CD8-positive, alpha-beta T cell (primary cell): ENCODE measurements at regions of chr6 and their contacts with region 1.

Region 1: DNA sequence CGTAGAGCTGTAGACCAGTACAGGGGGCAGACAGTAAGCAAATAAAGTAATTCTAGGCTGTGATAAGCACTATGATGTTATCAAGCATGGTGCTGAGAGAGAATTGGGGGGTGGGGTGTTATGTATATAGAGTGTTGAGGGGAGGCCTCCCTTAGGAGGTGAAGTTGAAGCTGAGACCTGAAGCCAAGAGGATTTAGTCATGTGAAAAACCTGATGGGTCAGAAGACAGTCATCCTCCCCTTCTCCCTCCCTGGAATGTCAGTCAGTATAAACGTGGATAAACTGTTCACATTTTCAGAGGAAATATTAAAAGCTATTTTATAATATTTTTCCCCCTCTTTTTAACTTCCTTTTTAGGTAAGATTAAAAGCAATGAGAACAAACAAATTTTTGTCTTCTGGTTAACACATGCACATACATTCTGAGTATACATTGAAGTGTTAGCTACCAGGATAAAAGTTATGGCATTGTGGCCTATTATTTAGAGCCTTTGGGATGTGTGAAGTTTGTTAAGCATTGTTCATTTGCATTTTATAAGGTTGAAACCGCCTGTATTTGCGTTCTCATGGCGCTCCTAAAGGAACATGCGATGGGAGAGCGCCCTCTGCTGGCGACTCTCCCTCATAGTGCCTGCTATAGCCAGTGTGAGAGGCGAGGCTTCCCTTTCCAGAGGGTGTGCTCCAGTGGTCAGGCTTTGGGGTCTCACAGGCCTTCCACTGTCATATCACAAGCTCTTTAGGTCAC is 35.4 kb upstream of the MAPK13 start:
- DNase-seq: peak; percentile 59 to 89 (median 82)
- ATAC-seq: peak; percentile 71
- H3K4me3 ChIP-seq: no peak overlapping the region
- H3K4me3 Mint-ChIP-seq: no peak overlapping the region
- H3K27ac ChIP-seq: peak overlapping the region in 1 of 2 experiments; percentile 42
- H3K27ac Mint-ChIP-seq: peak overlapping the region; percentile 67
- H3K4me1 ChIP-seq: peaks cover 27% of the 10 kb centered on the region
- H3K4me1 Mint-ChIP-seq: peaks cover 33% of the 10 kb centered on the region
- H3K27me3 ChIP-seq: no peaks in the 10 kb centered on the region
- H3K27me3 Mint-ChIP-seq: no peaks in the 10 kb centered on the region
- CTCF ChIP-seq: peak; percentile 98

Region 2: GRCh38 chr6:36067374-36068011 is 27.4 kb before region 1 on chr6:
- CTCF ChIA-PET with region 1: interaction called, 10 read pairs
- POLR2A ChIA-PET with region 1: no interaction called
- intact Hi-C with region 1: no loop called
- DNase-seq: no peak
- ATAC-seq: no peak
- H3K4me3 ChIP-seq: no peak overlapping the region
- H3K4me3 Mint-ChIP-seq: no peak overlapping the region
- H3K27ac ChIP-seq: no peak overlapping the region
- H3K27ac Mint-ChIP-seq: peak overlapping the region; percentile 38
- H3K4me1 ChIP-seq: peaks cover 15% of the 10 kb centered on the region
- H3K4me1 Mint-ChIP-seq: peaks cover 64% of the 10 kb centered on the region
- H3K27me3 ChIP-seq: no peaks in the 10 kb centered on the region
- H3K27me3 Mint-ChIP-seq: no peaks in the 10 kb centered on the region
- CTCF ChIP-seq: no peak

Region 3: GRCh38 chr6:36083446-36083845 is 11.5 kb before region 1 on chr6:
- CTCF ChIA-PET with region 1: interaction called, 36 read pairs
- POLR2A ChIA-PET with region 1: no interaction called
- intact Hi-C with region 1: loop called in 1 of 2 experiments (anchors 2 kb)
- DNase-seq: no peak
- ATAC-seq: no peak
- H3K4me3 ChIP-seq: no peak overlapping the region
- H3K4me3 Mint-ChIP-seq: no peak overlapping the region
- H3K27ac ChIP-seq: no peak overlapping the region
- H3K27ac Mint-ChIP-seq: no peak overlapping the region
- H3K4me1 ChIP-seq: no peaks in the 10 kb centered on the region
- H3K4me1 Mint-ChIP-seq: peaks cover 17% of the 10 kb centered on the region
- H3K27me3 ChIP-seq: no peaks in the 10 kb centered on the region
- H3K27me3 Mint-ChIP-seq: no peaks in the 10 kb centered on the region
- CTCF ChIP-seq: no peak

Region 4: DNA sequence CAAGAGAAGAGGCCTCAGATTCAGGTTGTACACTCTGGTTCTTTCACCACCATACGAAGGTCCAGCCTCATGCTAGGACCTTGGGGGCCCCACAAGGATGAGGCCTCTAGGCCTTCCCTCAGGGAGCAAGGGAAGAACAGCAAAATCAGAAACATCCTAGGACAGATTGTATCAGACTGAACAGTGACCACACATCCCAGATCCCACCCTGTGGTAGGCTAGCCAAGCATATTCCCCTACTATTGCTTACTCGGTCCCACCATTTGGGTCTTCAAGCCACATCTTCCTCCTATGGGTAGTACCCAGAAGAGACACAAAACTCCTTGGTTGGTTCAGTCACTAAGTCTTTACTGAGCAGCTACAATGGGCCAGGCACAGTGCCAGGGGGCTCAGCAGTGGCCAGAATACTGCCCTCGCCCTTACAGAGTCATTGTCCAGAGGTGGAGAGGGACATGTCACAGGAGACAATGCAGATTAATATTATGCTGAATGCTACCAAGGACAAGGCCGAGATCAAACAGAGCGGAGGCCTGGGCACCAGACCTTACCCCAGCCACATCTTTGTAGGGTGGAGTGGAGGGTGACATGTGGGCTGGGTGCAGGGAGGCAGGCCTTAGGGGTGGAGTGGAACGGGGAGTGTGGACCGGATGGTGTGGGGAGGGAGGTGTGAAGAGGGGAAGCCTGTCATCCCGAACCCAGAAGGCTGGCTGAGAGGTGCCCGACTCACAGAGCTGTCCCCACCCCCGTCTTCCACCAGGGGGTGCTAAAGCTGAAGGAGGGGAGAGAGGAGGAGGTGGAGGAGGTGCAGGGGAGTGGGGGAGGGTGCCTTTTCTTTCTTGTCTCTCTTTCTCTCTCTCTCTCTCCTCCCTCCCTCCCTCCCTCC is 28.6 kb after region 1 on chr6:
- CTCF ChIA-PET with region 1: interaction called, 88 read pairs
- POLR2A ChIA-PET with region 1: interaction called, 9 read pairs
- intact Hi-C with region 1: loop called in 1 of 2 experiments (anchors 1 kb)
- DNase-seq: peak; percentile 80 to 96 (median 90)
- ATAC-seq: peak; percentile 74
- H3K4me3 ChIP-seq: no peak overlapping the region
- H3K4me3 Mint-ChIP-seq: peak overlapping the region; percentile 54
- H3K27ac ChIP-seq: peak overlapping the region; percentile 38 to 99
- H3K27ac Mint-ChIP-seq: peak overlapping the region; percentile 100
- H3K4me1 ChIP-seq: peaks cover 87% of the 10 kb centered on the region
- H3K4me1 Mint-ChIP-seq: peaks cover 89% of the 10 kb centered on the region
- H3K27me3 ChIP-seq: no peaks in the 10 kb centered on the region
- H3K27me3 Mint-ChIP-seq: no peaks in the 10 kb centered on the region
- CTCF ChIP-seq: peak; percentile 54

Region 5: DNA sequence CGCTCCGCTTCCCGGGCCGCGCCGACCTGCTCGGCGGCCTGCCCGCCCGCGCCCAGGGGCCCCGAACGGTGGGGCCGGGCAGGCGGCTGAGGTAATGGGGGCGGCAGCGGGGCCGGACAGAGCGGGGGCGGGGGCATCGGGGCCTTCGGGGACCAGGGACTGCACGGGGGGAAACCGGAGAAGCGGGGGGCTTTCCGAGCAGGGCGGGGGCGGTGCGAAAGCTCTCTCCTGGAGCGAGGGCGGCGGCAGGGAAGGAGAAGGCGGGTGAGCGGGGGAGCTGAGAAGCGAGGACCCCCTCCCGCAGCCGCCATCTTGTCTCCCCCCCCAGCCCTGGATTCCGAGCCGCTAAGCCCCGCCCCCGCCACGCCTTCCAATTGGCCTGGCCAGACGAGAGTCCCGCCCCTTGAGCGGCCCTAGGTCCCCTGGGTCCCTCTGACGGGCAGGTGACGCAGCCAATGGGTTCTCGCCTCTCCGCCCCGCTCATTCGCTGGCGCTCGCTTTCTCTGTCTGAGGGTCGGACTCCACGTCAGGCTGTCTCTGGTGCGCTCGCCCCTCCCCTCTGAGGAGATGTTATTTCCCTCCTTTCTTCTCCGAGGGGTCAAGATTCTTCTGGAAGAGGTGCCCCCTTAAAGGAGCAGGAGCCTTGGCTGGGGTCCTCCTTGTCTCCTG is 102.1 kb after region 1 on chr6:
- CTCF ChIA-PET with region 1: interaction called, 16 read pairs
- POLR2A ChIA-PET with region 1: interaction called, 6 read pairs
- intact Hi-C with region 1: loop called (anchors 1 to 2 kb)
- DNase-seq: peak; percentile 99 to 100 (median 100)
- ATAC-seq: peak; percentile 91
- H3K4me3 ChIP-seq: peak overlapping the region; percentile 61 to 68
- H3K4me3 Mint-ChIP-seq: peak overlapping the region; percentile 88
- H3K27ac ChIP-seq: peak overlapping the region; percentile 74 to 77
- H3K27ac Mint-ChIP-seq: peak overlapping the region; percentile 94
- H3K4me1 ChIP-seq: peaks cover 29% of the 10 kb centered on the region
- H3K4me1 Mint-ChIP-seq: peaks cover 55% of the 10 kb centered on the region
- H3K27me3 ChIP-seq: no peaks in the 10 kb centered on the region
- H3K27me3 Mint-ChIP-seq: no peaks in the 10 kb centered on the region
- CTCF ChIP-seq: no peak

Region 6: DNA sequence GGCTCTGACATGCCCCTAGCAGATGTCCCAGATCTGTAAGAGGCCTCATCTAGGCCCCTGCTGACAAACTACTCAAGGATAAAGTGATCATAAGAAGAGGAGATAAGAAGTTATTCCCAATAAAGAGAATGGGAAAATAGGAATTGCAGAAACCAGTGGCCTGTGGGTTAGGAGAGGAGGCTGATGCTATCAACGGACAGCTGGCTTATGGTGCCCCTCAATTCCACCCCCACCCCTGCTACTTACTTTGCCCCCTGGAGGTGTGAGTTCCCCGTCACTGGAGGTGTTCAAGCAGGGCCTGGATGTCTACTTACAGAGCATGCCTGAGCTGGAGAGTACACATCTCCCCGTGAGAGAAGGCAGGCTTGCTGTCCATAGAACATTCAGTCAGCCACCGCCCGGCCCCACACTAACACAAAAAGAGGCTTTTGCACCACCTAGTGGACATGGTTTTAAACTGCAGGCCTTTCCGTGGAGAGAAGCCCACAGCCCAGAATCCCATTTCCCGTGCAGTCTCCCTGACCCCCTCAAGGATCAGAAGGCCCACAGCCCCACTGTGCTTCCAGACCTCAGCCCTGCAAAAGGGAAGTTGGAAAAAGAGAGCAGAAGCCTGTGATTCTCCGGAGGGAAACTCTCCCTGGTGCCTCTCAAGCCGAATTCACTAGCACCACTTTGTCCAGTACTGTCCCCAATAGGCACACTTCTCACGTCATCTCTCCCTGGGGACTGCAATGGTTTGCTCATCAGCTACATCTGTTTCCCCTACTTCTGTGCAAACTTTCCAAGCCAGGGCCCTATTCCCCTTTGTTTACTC is 265.5 kb after region 1 on chr6:
- CTCF ChIA-PET with region 1: interaction called, 23 read pairs
- POLR2A ChIA-PET with region 1: no interaction called
- intact Hi-C with region 1: loop called (anchors 1 to 5 kb)
- DNase-seq: peak; percentile 38 to 81 (median 69)
- ATAC-seq: peak; percentile 93
- H3K4me3 ChIP-seq: no peak overlapping the region
- H3K4me3 Mint-ChIP-seq: no peak overlapping the region
- H3K27ac ChIP-seq: no peak overlapping the region
- H3K27ac Mint-ChIP-seq: no peak overlapping the region
- H3K4me1 ChIP-seq: peaks cover 4% of the 10 kb centered on the region
- H3K4me1 Mint-ChIP-seq: peaks cover 11% of the 10 kb centered on the region
- H3K27me3 ChIP-seq: no peaks in the 10 kb centered on the region
- H3K27me3 Mint-ChIP-seq: peaks cover 3% of the 10 kb centered on the region
- CTCF ChIP-seq: peak; percentile 74